CD14-positive monocyte (primary cell): ENCODE measurements at regions of chr5 and their contacts with region 1.

Region 1: GRCh38 chr5:177554474-177555111 is at the start of gene FAM193B:
- DNase-seq: peak; percentile 89 to 93 (median 90)
- H3K4me3 ChIP-seq: peak within 1 kb of the TSS; percentile 64 to 90 (median 83)
- H3K4me3 Mint-ChIP-seq: peak within 1 kb of the TSS; percentile 80 to 81
- H3K27ac ChIP-seq: peak within 1 kb of the TSS in 1 of 2 donors; percentile 61
- H3K27ac Mint-ChIP-seq: peak within 1 kb of the TSS in 5 of 7 donors; percentile 59 to 69 (median 64)
- H3K4me1 ChIP-seq: peaks cover 16 to 19% of the 10 kb centered on the region in 2 donors
- H3K4me1 Mint-ChIP-seq: peaks cover 28% of the 10 kb centered on the region
- H3K27me3 ChIP-seq: no peaks in the 10 kb centered on the region
- H3K27me3 Mint-ChIP-seq: peaks cover 0 to 7% (median 2%) of the 10 kb centered on the region in 3 donors
- CTCF ChIP-seq: peak; percentile 22
- polyA plus RNA-seq, gene FAM193B: 1.6 to 216 (median 1.9) TPM

Region 2: DNA sequence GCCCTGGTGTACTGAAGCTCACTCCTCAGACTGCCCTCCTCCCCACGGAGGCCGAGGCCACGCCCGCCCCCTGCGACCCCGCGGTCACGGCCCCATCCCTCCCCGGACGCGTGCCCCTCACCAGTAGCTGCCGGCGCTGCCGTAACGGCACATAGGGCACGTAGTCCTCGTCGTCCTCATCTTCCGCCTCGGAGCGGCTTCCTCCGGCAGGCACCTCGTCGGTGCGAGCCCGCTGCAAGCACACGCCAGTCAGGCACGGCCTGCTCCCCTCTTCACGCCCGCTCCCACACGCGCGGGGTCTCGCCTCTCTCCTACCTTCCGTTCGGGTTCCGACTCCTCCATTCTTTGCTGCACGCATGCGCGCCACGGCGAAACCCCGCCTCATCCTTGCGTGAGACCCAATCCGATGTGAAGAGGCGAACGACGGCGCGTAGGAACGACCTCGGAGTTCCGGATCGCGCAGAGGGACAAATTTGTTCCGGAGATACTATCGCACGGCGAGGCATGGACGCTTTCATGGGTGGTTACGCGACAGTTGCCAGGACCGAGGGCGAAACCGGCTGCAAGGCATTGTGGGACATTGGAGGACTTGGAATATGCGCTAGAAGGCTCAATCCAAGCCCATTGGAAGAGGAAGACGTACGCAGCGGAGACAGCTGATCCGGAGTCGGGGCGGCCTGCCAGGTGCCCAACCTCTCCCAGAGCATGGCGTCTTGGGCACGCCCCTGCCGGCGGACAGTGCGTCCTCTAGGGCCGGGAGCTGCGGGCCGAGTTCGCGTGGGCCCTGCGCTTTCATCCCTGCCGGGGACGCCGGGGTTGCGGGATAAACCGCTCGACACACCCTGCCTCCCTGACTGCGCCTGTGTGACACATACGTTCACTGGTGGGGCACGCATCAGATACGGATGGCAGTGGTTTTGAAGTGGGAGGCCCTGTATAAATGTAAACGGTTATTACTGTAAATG is 37.7 kb before region 1 on chr5 and contains the start of gene DDX41:
- intact Hi-C with region 1: loop called in 1 of 2 experiments (anchors 5 kb)
- DNase-seq: peak; percentile 95 to 97 (median 97)
- H3K4me3 ChIP-seq: peak within 1 kb of the TSS; percentile 78 to 98 (median 88)
- H3K4me3 Mint-ChIP-seq: peak within 1 kb of the TSS; percentile 94 to 98
- H3K27ac ChIP-seq: peak within 1 kb of the TSS; percentile 74 to 92
- H3K27ac Mint-ChIP-seq: peak within 1 kb of the TSS; percentile 91 to 96 (median 94)
- H3K4me1 ChIP-seq: peaks cover 19 to 33% of the 10 kb centered on the region in 2 donors
- H3K4me1 Mint-ChIP-seq: peaks cover 24% of the 10 kb centered on the region
- H3K27me3 ChIP-seq: no peaks in the 10 kb centered on the region
- H3K27me3 Mint-ChIP-seq: peaks cover 0 to 3% (median 0%) of the 10 kb centered on the region in 3 donors
- CTCF ChIP-seq: no peak
- polyA plus RNA-seq, gene DDX41: 44.9 to 178 (median 70.3) TPM

Region 3: DNA sequence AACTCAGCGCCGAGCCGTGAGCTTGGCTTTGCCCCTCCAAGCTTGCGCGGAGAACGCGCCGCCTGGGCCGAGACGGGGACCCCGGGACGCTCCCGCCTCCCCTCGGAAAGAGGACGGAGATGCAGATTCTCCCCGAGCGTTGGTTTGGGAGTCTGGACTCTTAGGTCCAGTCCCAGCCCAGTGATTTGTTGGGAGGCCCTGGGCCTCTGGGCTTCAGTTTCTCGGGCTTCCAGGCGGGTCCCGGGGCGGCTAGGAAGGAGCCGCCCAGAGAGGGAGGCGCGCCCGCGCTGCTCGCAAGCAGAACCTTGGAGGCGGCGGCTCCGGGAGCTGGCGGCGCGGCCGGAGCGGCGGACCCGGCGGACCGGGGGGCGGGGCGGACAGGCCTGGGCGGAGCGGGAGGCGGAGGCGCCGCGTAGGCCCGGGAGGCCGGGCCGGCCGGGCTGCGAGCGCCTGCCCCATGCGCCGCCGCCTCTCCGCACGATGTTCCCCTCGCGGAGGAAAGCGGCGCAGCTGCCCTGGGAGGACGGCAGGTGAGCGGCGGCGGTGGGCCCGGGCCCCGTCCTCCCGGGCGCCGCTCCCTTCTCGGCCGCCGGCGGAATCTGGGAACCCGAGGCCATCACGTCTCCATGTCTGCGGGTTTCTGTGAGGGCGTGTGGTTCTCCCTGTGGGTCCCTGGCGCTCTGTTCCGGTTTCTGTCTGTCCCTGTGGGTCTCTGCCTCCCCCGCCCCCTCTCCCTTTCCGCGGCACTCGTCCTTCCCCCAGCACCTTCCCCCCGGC is 45.3 kb after region 1 on chr5 and contains the start of gene B4GALT7:
- intact Hi-C with region 1: loop called in 1 of 2 experiments (anchors 5 kb)
- DNase-seq: peak; percentile 62 to 67 (median 66)
- H3K4me3 ChIP-seq: peak within 1 kb of the TSS; percentile 76 to 90 (median 86)
- H3K4me3 Mint-ChIP-seq: peak within 1 kb of the TSS; percentile 83 to 97
- H3K27ac ChIP-seq: peak within 1 kb of the TSS; percentile 80 to 91
- H3K27ac Mint-ChIP-seq: peak within 1 kb of the TSS; percentile 88 to 95 (median 91)
- H3K4me1 ChIP-seq: peaks cover 19 to 23% of the 10 kb centered on the region in 2 donors
- H3K4me1 Mint-ChIP-seq: peaks cover 33% of the 10 kb centered on the region
- H3K27me3 ChIP-seq: no peaks in the 10 kb centered on the region
- H3K27me3 Mint-ChIP-seq: peaks cover 0 to 3% (median 1%) of the 10 kb centered on the region in 3 donors
- CTCF ChIP-seq: no peak
- polyA plus RNA-seq, gene B4GALT7: 15.6 to 21.7 (median 18.8) TPM

Region 4: DNA sequence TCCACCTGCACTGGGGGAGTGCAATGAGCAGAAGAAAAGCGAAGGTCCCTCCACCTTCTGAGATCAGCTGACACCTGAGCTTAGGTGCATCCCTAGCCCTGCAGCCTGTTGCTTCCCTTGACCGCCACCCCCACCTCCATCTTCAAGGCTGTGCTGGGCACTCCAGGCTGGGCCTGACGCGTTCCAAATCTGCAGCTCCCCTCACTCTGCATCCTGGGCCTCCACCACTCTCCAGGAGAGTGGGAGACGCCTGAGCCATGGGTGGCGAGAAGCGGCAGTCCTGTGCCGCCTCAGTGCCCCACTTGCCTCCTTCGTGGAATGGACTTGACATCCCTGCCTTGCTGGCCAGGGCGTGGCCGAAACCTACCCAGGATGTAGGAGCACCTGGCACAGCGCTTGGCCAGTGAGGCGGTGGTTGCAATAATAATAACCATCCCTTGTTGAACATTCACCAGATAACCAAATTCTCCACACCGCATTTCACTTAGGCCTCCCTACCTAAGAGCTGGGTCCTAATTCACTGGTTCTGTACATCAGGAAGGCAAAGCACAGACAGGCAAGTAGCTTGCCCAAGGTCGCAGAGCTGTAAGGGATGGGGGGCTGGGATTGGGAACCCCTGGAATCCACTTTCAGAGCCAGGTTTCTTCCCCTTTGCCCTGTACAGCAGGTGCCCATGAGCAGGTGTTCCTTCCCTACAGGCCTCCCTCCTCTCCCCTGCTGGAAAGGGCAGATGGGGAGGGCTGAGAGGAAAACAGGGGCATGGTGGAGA is 57.0 kb after region 1 on chr5:
- intact Hi-C with region 1: no loop called
- DNase-seq: no peak
- H3K4me3 ChIP-seq: no peak overlapping the region
- H3K4me3 Mint-ChIP-seq: no peak overlapping the region
- H3K27ac ChIP-seq: no peak overlapping the region
- H3K27ac Mint-ChIP-seq: no peak overlapping the region
- H3K4me1 ChIP-seq: no peaks in the 10 kb centered on the region
- H3K4me1 Mint-ChIP-seq: peaks cover 10% of the 10 kb centered on the region
- H3K27me3 ChIP-seq: no peaks in the 10 kb centered on the region
- H3K27me3 Mint-ChIP-seq: peaks cover 0 to 1% (median 1%) of the 10 kb centered on the region in 3 donors
- CTCF ChIP-seq: no peak